Panc1 (cell line): ENCODE measurements at regions of chr19 and their contacts with region 1.

Region 1: DNA sequence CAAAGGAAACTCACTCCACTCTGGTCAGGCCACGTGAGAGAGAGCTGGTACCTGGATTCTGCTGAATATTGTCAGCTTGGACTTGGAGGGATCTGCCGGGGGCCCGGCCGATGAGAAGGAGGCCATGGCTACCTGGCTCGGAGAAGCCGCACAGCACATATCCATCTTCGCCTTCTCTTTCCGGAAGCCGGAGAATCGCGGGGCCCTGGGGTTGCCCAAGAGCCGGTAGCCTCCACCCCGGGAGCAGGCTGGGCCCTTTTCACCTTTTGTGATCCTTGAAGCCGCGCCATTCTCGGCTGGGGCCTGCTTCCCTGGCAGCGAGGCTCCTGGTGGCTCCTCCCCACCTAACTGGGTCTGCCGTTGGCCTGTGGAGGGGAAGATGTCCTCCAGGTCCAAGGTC is 28.9 kb downstream of the ZNF541 start:
- DNase-seq: no peak
- ATAC-seq: no peak
- H3K4me3 ChIP-seq: no peak overlapping the region
- H3K27ac ChIP-seq: no peak overlapping the region
- H3K4me1 ChIP-seq: no peaks in the 10 kb centered on the region
- H3K27me3 ChIP-seq: no peaks in the 10 kb centered on the region
- CTCF ChIP-seq: no peak

Region 2: DNA sequence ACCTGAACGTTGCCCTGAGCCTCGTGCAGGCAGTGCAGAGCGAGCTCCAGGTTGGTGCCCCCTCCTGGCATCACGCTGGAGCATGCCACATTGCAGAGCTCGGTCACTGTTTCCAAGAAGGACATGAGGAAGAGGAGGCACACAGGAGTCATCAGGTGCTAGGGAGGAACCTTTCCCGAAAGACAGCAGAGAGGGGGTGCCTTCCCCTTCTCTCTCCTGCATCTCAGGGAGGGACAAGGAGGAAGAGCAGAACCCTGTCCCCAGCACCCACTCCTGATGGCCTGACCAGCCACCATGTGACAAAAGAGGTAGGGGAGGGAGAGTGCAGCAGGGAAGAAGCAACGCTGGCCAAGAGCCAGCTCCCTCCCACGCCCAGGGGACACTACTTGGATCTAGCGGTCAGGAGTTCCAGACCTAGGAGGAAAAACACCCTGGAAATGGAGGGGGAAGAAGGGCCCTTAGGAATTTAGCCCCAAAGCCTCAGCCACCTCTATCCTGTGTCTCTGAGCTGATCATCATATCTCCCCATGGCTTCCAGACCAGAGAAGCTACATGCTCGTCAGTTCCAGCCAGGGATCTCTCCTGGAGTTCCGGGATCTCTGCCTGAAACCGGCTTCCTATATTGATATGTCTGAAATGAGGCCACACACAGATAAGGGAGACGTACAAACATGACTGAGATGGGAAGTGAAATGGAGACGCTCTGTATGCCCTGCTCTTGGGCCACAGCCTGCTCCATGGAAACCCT is 12.3 kb before region 1 on chr19:
- CTCF ChIA-PET with region 1: no interaction called
- POLR2A ChIA-PET with region 1: interaction called, 13 read pairs
- in situ Hi-C with region 1: no loop called
- intact Hi-C with region 1: no loop called
- DNase-seq: no peak
- ATAC-seq: no peak; the same call in 1 of the 2 replicates
- H3K4me3 ChIP-seq: no peak overlapping the region
- H3K27ac ChIP-seq: no peak overlapping the region
- H3K4me1 ChIP-seq: no peaks in the 10 kb centered on the region
- H3K27me3 ChIP-seq: no peaks in the 10 kb centered on the region
- CTCF ChIP-seq: no peak